MCF 10A (cell line): ENCODE measurements at regions of chr1 and their contacts with region 1.

Region 1: GRCh38 chr1:223358826-223359225 is 5.2 kb downstream of the SUSD4 start:
- DNase-seq: peak; percentile 58
- H3K4me3 Mint-ChIP-seq: no peak overlapping the region
- H3K27ac Mint-ChIP-seq: no peak overlapping the region
- H3K4me1 Mint-ChIP-seq: peaks cover 7% of the 10 kb centered on the region
- H3K27me3 Mint-ChIP-seq: peaks cover 51% of the 10 kb centered on the region
- CTCF ChIP-seq: peak; percentile 24

Region 2: GRCh38 chr1:223344491-223344890 is 14.3 kb before region 1 on chr1:
- CTCF ChIA-PET with region 1: interaction called, 19 read pairs
- POLR2A ChIA-PET with region 1: interaction called, 4 read pairs
- intact Hi-C with region 1: no loop called
- DNase-seq: no peak
- H3K4me3 Mint-ChIP-seq: no peak overlapping the region
- H3K27ac Mint-ChIP-seq: no peak overlapping the region
- H3K4me1 Mint-ChIP-seq: peaks cover 6% of the 10 kb centered on the region
- H3K27me3 Mint-ChIP-seq: no peaks in the 10 kb centered on the region
- CTCF ChIP-seq: no peak

Region 3: DNA sequence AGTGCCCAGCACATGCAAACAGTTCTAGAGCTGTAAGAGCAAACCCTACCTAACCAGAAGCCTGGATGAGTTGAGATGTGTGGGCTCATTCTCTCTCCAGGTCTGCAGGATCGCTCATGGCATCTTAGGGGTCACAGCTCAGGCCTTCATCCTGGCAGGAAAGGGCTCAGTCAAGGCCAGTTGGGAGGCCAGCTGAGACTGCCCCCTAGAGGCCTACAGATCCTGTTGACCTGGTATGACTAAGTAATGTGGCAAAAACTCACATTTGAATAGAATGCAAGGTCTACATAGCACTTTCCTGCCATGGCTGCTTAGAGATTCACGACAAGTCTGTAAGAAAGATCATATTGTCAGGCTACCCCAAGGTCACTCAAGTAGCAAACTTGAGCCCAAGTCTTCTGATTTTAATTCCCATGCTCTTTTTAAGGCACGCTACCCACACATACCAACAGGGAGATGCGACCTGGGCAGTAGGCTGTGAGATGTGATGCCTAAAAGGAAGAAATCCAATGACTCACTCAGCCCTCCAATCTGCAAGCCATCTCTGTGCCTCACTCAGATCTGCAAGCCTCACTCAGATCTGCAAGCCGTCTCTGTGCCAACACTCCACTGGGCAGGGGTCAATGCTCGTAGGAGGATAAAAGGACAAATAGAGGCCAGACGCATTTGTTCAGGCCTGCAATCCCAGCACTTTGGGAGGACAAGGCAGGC is 311.8 kb after region 1 on chr1:
- CTCF ChIA-PET with region 1: interaction called, 3 read pairs
- POLR2A ChIA-PET with region 1: no interaction called
- intact Hi-C with region 1: loop called (anchors 10 kb)
- DNase-seq: peak; percentile 87
- H3K4me3 Mint-ChIP-seq: no peak overlapping the region
- H3K27ac Mint-ChIP-seq: no peak overlapping the region
- H3K4me1 Mint-ChIP-seq: peaks cover 22% of the 10 kb centered on the region
- H3K27me3 Mint-ChIP-seq: no peaks in the 10 kb centered on the region
- CTCF ChIP-seq: peak; percentile 97